K562 (cell line): ENCODE measurements at regions of chr17 and their contacts with region 1.

Region 1: DNA sequence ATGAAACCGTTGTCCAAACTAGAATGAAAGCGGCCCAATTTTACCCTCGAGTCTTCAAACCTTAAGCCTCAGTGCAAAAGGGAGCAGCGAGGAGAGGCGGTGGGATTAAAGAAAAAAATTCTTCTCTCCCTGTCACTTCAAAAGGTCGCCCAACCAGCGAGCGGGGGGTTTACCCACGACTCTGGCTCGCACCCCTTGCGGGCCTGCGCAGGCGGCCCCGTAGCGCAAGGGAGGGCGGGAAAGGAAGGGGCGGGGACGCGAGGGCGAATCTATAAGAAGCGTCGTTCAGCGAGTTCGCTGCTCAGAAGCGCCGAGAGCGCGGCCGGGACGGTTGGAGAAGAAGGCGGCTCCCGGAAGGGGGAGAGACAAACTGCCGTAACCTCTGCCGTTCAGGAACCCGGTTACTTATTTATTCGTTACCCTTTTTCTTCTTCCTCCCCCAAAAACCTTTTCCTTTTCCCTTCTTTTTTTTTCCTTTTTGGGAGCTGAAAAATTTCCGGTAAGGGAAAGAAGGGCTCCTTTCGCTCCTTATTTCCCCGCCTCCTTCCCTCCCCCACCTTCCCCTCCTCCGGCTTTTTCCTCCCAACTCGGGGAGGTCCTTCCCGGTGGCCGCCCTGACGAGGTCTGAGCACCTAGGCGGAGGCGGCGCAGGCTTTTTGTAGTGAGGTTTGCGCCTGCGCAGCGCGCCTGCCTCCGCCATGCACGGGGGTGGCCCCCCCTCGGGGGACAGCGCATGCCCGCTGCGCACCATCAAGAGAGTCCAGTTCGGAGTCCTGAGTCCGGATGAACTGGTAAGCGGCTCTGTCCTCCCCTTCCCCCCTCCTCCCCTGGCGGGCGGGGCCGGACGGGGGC is at the start of gene POLR2A:
- DNase-seq: peak; percentile 89 to 97 (median 94)
- ATAC-seq: peak; percentile 78
- H3K4me3 ChIP-seq: peak within 1 kb of the TSS; percentile 63
- H3K27ac ChIP-seq: peak within 1 kb of the TSS; percentile 100
- H3K4me1 ChIP-seq: peaks cover 16 to 36% of the 10 kb centered on the region in 2 experiments; a peak in 4 of 5 replicates
- H3K27me3 ChIP-seq: no peaks in the 10 kb centered on the region
- CTCF ChIP-seq: no peak
- EP300 ChIP-seq: peak; percentile 14; the same call in 1 of the 2 replicates
- POLR2A ChIP-seq: peak; percentile 100
- RAD21 ChIP-seq: no peak
- polyA plus RNA-seq, gene POLR2A: 1.3 to 1.5 TPM

Region 2: GRCh38 chr17:7351665-7352501 is 132.4 kb before region 1 on chr17 and contains the start of gene KCTD11:
- CTCF ChIA-PET with region 1: interaction called, 5 read pairs
- POLR2A ChIA-PET with region 1: interaction called, 7 read pairs
- in situ Hi-C with region 1: no loop called
- intact Hi-C with region 1: loop called (anchors 5 kb)
- DNase-seq: peak; percentile 88 to 91 (median 88)
- ATAC-seq: peak; percentile 86
- H3K4me3 ChIP-seq: peak within 1 kb of the TSS; percentile 72
- H3K27ac ChIP-seq: peak within 1 kb of the TSS; percentile 88
- H3K4me1 ChIP-seq: peaks cover 3 to 70% of the 10 kb centered on the region in 2 experiments; a peak in 3 of 5 replicates
- H3K27me3 ChIP-seq: no peaks in the 10 kb centered on the region
- CTCF ChIP-seq: peak in 2 of 3 experiments; percentile 52 to 54; a peak in 4 of 6 replicates
- EP300 ChIP-seq: no peak
- POLR2A ChIP-seq: peak; percentile 66
- RAD21 ChIP-seq: peak in 1 of 2 experiments; percentile 13; a peak in 1 of 4 replicates
- polyA plus RNA-seq, gene KCTD11: 0.01 TPM in 1 of 2 experiments, not detected in the other

Region 3: DNA sequence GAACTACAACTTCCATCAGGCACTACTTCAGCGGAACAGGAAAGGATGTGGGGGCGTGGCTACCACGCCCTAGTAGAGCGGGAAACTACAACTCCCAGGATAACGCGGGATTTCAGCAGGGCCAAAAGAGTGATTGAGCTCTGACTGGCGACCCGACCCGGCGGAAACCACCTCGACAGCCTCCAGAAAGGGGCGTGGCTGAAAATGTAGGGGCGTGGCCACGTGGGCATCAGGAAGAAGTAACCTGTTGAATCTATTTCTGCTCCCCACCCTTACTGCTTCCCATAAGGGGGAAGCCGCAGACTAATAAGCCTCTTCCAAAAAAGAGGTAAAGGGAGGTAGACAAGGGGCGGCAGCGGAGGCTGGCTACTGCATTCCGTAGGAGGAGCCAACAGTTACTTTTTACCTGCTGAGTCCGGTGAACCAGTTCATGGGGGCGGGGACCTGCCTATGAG is 49.0 kb before region 1 on chr17 and contains the start of gene TMEM102:
- CTCF ChIA-PET with region 1: no interaction called
- POLR2A ChIA-PET with region 1: interaction called, 21 read pairs
- in situ Hi-C with region 1: no loop called
- intact Hi-C with region 1: loop called (anchors 5 kb)
- DNase-seq: peak; percentile 87 to 98 (median 90)
- ATAC-seq: peak; percentile 93
- H3K4me3 ChIP-seq: peak within 1 kb of the TSS; percentile 64
- H3K27ac ChIP-seq: peak within 1 kb of the TSS; percentile 75
- H3K4me1 ChIP-seq: peaks cover 9 to 52% of the 10 kb centered on the region in 2 experiments; a peak in 4 of 5 replicates
- H3K27me3 ChIP-seq: no peaks in the 10 kb centered on the region
- CTCF ChIP-seq: no peak
- EP300 ChIP-seq: no peak
- POLR2A ChIP-seq: peak; percentile 66
- RAD21 ChIP-seq: no peak
- polyA plus RNA-seq, gene TMEM102: 0.03 TPM in 1 of 2 experiments, not detected in the other

Region 4: GRCh38 chr17:7496470-7497183 is 12.3 kb after region 1 on chr17:
- CTCF ChIA-PET with region 1: no interaction called
- POLR2A ChIA-PET with region 1: interaction called, 25 read pairs
- in situ Hi-C with region 1: no loop called
- intact Hi-C with region 1: no loop called
- DNase-seq: peak in 1 of 4 experiments; percentile 7
- ATAC-seq: no peak
- H3K4me3 ChIP-seq: no peak overlapping the region
- H3K27ac ChIP-seq: no peak overlapping the region
- H3K4me1 ChIP-seq: no peaks in the 10 kb centered on the region
- H3K27me3 ChIP-seq: no peaks in the 10 kb centered on the region
- CTCF ChIP-seq: no peak
- EP300 ChIP-seq: no peak
- POLR2A ChIP-seq: no peak
- RAD21 ChIP-seq: no peak

Region 5: DNA sequence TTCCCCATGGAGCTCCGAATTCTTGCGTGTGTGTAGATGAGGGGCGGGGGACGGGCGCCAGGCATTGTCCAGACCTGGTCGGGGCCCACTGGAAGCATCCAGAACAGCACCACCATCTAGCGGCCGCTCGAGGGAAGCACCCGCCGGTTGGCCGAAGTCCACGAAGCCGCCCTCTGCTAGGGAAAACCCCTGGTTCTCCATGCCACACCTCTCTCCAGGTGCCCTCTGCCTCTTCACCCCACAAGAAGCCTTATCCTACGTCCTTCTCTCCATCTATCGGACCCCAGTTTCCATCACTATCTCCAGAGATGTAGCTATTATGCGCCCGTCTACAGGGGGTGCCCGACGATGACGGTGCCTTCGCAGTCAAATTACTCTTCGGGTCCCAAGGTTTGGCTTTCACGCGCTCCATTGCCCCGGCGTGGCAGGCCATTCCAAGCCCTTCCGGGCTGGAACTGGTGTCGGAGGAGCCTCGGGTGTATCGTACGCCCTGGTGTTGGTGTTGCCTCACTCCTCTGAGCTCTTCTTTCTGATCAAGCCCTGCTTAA is 76.8 kb after region 1 on chr17:
- CTCF ChIA-PET with region 1: no interaction called
- POLR2A ChIA-PET with region 1: interaction called, 6 read pairs
- in situ Hi-C with region 1: no loop called
- intact Hi-C with region 1: loop called (anchors 2 kb)
- DNase-seq: peak; percentile 77 to 87 (median 82)
- ATAC-seq: peak; percentile 89
- H3K4me3 ChIP-seq: peak overlapping the region; percentile 76
- H3K27ac ChIP-seq: peak overlapping the region; percentile 81
- H3K4me1 ChIP-seq: peaks cover 10 to 52% of the 10 kb centered on the region in 2 experiments; a peak in 4 of 5 replicates
- H3K27me3 ChIP-seq: no peaks in the 10 kb centered on the region
- CTCF ChIP-seq: peak; percentile 76 to 86 (median 79)
- EP300 ChIP-seq: no peak
- POLR2A ChIP-seq: no peak
- RAD21 ChIP-seq: peak; percentile 77 to 79